Activated naive CD4-positive, alpha-beta T cell treated with anti-CD3 and anti-CD28 coated beads for 36 hours (primary cell): ENCODE measurements at regions of chr9 and their contacts with region 1.

Region 1: GRCh38 chr9:101398068-101398929 is at the starts of genes MRPL50 and ZNF189:
- DNase-seq: peak; percentile 99
- H3K4me3 Mint-ChIP-seq: peak within 1 kb of the TSS; percentile 92
- H3K27ac Mint-ChIP-seq: peak within 1 kb of the TSS; percentile 97
- H3K4me1 Mint-ChIP-seq: peaks cover 66% of the 10 kb centered on the region
- H3K27me3 Mint-ChIP-seq: no peaks in the 10 kb centered on the region
- total RNA-seq, gene MRPL50: 13.2 to 14.3 TPM
- total RNA-seq, gene ZNF189: 5.5 to 5.7 TPM

Region 2: DNA sequence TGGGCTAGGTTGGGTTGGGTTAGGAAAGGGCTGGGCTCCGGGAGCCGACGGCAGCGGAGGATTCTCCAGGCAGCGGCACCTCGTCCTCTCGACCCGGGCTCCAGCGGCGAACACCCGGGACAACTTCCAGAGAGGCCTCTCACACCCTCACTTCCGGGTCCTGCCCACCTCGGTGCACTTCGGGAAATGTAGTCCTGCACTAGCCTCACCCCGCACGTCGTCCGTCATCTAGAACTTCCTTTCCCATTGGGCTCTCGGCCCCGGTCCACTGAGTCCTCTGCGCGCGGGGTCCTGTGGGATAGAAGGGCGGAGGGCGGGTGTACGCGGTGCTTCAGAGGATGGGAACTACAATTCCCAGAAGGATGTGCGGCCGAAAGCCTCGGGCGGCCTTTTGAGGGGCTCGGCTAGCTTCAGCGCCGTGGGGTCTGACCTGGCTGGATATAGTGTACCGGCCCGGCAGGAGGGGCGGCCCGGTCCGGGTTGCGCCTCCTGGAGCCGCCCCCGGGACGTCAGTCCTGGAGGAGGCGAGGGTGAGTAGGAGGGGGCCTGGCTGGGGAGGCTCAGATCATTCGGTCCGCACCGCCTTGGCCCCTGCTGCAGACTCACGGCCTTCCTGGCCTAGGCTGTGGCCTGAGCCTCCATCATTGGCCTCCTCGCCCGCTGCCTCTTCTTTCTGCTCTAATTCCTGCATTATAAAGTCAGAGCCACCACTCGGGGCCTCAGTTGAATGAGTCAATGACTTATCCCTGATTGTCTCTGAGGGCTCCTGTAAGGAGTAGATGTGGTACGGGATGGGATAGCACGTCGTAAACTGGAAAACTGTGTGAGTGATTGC is 1299.2 kb before region 1 on chr9 and contains the starts of genes ERP44 and INVS:
- CTCF ChIA-PET with region 1: no interaction called
- intact Hi-C with region 1: loop called (anchors 1 kb)
- DNase-seq: peak; percentile 99
- H3K4me3 Mint-ChIP-seq: peak within 1 kb of the TSS; percentile 97
- H3K27ac Mint-ChIP-seq: peak within 1 kb of the TSS; percentile 79
- H3K4me1 Mint-ChIP-seq: peaks cover 29% of the 10 kb centered on the region
- H3K27me3 Mint-ChIP-seq: no peaks in the 10 kb centered on the region
- total RNA-seq, gene ERP44: 9.1 to 9.5 TPM
- total RNA-seq, gene INVS: 5.7 to 7.3 TPM

Region 3: GRCh38 chr9:100411472-100412283 is 986.6 kb before region 1 on chr9:
- CTCF ChIA-PET with region 1: no interaction called
- intact Hi-C with region 1: loop called (anchors 1 kb)
- DNase-seq: peak; percentile 93
- H3K4me3 Mint-ChIP-seq: peak overlapping the region; percentile 82
- H3K27ac Mint-ChIP-seq: peak overlapping the region; percentile 32
- H3K4me1 Mint-ChIP-seq: peaks cover 13% of the 10 kb centered on the region
- H3K27me3 Mint-ChIP-seq: peaks cover 17% of the 10 kb centered on the region

Region 4: GRCh38 chr9:101449140-101449721 is 50.9 kb after region 1 on chr9:
- CTCF ChIA-PET with region 1: interaction called, 3 read pairs
- intact Hi-C with region 1: loop called (anchors 2 kb)
- DNase-seq: peak; percentile 50
- H3K4me3 Mint-ChIP-seq: peak overlapping the region; percentile 53
- H3K27ac Mint-ChIP-seq: no peak overlapping the region
- H3K4me1 Mint-ChIP-seq: peaks cover 9% of the 10 kb centered on the region
- H3K27me3 Mint-ChIP-seq: peaks cover 52% of the 10 kb centered on the region